HepG2 (cell line): ENCODE measurements at regions of chr2 and their contacts with region 1.

Region 1: DNA sequence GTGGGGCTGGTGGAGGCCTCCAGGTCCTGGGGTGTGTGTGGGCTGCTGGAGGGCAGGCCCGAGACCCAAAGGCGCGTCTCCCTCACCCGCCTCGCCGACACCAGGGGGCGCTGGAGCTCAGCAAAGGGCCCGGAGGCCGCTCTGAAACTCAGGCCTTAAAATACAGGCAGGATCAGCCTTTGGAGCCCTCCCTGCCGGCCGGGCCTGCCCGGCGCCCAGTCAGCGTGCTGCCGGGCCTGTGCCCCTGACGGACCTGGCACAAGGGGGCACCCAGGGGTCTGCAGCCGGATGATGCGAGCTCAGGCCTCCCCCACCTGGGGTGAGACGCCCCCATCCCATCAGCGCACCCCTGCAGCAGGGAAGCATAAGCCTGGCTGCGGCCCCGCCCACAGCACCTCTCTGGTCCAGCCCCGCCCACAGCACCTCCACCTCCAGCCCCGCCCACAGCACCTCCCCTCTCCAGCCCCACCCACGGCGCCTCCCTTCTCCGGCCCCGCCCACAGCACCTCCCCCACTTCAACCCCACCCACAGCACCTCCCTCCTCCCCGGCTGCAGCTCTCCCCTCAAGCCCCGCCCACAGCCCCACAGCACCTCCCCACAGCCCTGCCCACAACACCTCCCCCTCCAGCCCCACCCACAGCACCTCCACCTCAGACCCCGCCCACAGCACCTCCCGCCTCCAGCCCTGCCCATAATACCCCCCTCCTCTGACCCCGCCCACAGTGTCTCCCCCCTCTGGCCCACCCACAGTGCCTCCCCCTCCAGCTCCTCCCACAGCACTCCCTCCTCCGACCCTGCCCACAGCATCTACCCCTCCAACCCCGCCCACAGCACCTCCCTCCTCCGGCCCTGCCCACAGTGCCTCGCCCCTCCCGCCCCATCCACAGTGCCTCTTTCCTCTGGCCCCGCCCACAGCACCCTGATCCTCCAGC is 92.8 kb upstream of the OTOS start:
- DNase-seq: peak; percentile 68
- ATAC-seq: peak; percentile 86
- H3K4me3 ChIP-seq: peak overlapping the region in 2 of 3 experiments; percentile 35 to 64; a peak in 3 of 6 replicates
- H3K27ac ChIP-seq: no peak overlapping the region
- H3K4me1 ChIP-seq: peaks cover 15% of the 10 kb centered on the region
- H3K27me3 ChIP-seq: peaks cover 12 to 54% of the 10 kb centered on the region in 2 experiments
- CTCF ChIP-seq: peak; percentile 99
- EP300 ChIP-seq: peak in 1 of 2 experiments; percentile 32; a peak in 1 of 4 replicates
- POLR2A ChIP-seq: no peak
- RAD21 ChIP-seq: peak; percentile 99

Region 2: DNA sequence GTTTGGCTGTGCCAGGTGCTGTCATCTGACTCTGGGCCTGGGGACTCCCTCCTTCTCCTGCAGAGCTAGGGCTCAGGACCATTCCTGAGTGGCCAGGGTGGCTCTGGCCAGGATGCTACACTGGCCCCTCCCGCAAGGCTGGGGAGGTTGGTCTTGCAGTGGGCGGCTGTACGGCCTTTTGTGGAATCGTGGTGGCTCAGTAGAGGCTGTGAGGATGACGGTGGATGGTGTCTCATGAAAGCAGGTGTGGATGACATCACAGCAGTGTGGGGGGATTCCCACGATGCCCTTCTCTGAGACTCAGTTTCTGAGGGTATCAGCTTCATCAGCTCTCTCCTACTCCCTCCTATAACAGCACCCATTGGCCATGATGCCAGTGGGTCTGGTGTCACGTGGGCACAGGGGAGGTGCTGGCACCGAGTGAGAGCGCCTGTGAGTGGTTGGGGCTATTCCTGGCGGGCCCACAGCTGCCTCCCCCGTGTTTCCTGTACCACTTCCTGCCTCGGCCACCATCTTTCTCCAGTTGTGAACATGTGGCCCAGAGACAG is 688.2 kb before region 1 on chr2:
- CTCF ChIA-PET with region 1: no interaction called
- POLR2A ChIA-PET with region 1: no interaction called
- in situ Hi-C with region 1: no loop called
- intact Hi-C with region 1: no loop called
- DNase-seq: no peak
- ATAC-seq: no peak
- H3K4me3 ChIP-seq: no peak overlapping the region
- H3K27ac ChIP-seq: no peak overlapping the region
- H3K4me1 ChIP-seq: no peaks in the 10 kb centered on the region
- H3K27me3 ChIP-seq: peaks cover 6 to 41% of the 10 kb centered on the region in 2 experiments; a peak in 3 of 5 replicates
- CTCF ChIP-seq: no peak
- EP300 ChIP-seq: no peak
- POLR2A ChIP-seq: no peak
- RAD21 ChIP-seq: no peak

Region 3: GRCh38 chr2:239853121-239853520 is 380.1 kb before region 1 on chr2:
- CTCF ChIA-PET with region 1: no interaction called
- POLR2A ChIA-PET with region 1: no interaction called
- in situ Hi-C with region 1: no loop called
- intact Hi-C with region 1: no loop called
- DNase-seq: no peak
- ATAC-seq: no peak; the same call in 2 of the 3 replicates
- H3K4me3 ChIP-seq: no peak overlapping the region
- H3K27ac ChIP-seq: no peak overlapping the region
- H3K4me1 ChIP-seq: 0 out of 2 replicates have a peak, but pooled peaks cover 6% of the 10 kb centered on the region
- H3K27me3 ChIP-seq: peaks cover 1 to 20% of the 10 kb centered on the region in 2 experiments; a peak in 2 of 5 replicates
- CTCF ChIP-seq: no peak
- EP300 ChIP-seq: no peak
- POLR2A ChIP-seq: no peak
- RAD21 ChIP-seq: no peak

Region 4: DNA sequence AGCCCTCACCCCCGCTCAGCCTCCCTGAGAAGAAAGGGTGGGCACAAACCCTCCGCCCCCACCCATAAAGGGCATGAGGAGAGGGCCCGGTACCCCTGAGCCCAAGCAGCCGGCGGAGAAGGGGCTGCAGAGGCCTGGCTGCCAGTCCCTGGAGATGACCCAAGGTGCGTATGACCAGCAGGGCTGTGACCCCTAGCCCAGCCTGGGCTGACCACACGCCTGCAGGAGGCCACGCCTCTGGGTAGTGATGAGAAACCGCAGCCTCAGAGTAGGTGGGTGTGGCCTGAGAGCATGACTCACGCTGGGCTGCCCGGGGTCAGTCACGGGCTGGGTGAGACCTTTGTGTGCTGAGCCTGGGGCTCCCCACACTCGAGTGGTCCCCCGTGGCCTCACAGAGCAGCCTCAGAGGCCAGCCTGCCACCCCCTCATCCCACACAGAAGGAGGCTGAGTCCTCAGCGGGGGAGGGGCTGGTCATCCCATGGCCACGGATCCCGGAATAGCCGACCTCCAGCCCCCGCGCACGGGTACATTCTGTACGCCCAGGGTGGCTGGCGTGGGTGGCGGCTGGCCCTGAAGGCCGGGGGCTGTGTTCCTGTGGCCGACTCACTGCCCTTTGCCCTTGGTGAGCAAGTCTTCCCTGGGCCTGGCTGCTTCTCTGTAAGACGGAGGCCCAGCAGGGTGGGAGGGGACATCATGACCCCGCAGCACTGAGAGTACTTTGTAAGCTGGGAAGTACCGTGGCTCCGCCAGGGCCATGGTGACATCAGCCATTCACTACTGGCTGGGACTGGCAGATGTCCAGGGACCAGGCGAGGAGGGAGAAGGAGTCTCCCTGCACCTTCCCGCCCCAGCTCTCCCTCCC is 18.0 kb after region 1 on chr2:
- CTCF ChIA-PET with region 1: no interaction called
- POLR2A ChIA-PET with region 1: interaction called, 23 read pairs
- in situ Hi-C with region 1: no loop called
- intact Hi-C with region 1: loop called (anchors 2 kb)
- DNase-seq: peak; percentile 94
- ATAC-seq: peak; percentile 89
- H3K4me3 ChIP-seq: peak overlapping the region; percentile 45 to 78 (median 53)
- H3K27ac ChIP-seq: peak overlapping the region; percentile 68
- H3K4me1 ChIP-seq: peaks cover 67% of the 10 kb centered on the region
- H3K27me3 ChIP-seq: no peaks in the 10 kb centered on the region; a peak in 1 of 5 replicates
- CTCF ChIP-seq: peak; percentile 23; the same call in 1 of the 2 replicates
- EP300 ChIP-seq: peak in 1 of 2 experiments; percentile 7; a peak in 1 of 4 replicates
- POLR2A ChIP-seq: peak in 1 of 2 experiments; percentile 93; a peak in 2 of 4 replicates
- RAD21 ChIP-seq: no peak

Region 5: GRCh38 chr2:240339996-240340761 is 107.0 kb after region 1 on chr2:
- CTCF ChIA-PET with region 1: no interaction called
- POLR2A ChIA-PET with region 1: no interaction called
- in situ Hi-C with region 1: no loop called
- intact Hi-C with region 1: loop called (anchors 10 kb)
- DNase-seq: no peak
- ATAC-seq: peak; percentile 48; the same call in 2 of the 3 replicates
- H3K4me3 ChIP-seq: no peak overlapping the region
- H3K27ac ChIP-seq: no peak overlapping the region
- H3K4me1 ChIP-seq: no peaks in the 10 kb centered on the region
- H3K27me3 ChIP-seq: peaks cover 10 to 69% of the 10 kb centered on the region in 2 experiments; a peak in 4 of 5 replicates
- CTCF ChIP-seq: no peak
- EP300 ChIP-seq: no peak
- POLR2A ChIP-seq: no peak
- RAD21 ChIP-seq: no peak